A549 (cell line): ENCODE measurements at regions of chr1 and their contacts with region 1.

Region 1: DNA sequence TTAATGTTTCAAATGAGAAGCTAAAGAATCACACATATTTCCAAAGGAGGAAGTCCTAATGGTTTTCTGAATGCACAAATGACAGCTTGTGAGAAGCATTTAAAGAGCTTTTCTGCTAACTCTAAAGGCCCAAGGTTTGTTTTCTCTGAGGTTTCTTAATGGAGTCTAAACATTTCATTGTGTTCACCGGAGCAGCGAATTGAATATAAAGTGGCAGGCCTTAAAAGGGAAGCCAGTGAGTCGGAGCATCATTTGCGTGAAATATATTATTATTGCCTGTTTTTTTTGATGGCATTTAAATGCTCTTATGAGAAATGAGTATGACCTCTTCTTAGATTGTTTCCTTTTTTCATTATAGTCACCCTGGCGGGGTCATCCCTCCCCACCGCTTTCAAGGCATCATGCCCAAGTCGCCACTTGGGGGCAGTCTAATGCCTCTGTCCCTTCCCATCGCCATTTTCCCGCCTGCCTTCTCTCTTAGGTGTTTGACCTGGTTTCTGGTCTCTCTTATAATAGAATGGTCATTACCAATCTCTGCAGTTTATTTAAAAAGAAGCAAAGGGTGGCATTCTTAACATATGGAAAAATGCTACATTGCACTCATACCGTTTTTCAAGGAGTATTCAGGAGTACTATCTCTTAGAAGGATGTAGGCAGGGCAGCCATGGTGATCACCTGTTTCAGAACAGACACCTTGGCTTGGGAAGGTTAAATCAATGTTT is 25.3 kb upstream of the OVAAL start:
- DNase-seq: peak; percentile 69 to 72
- ATAC-seq: peak; percentile 90 to 93
- H3K4me3 ChIP-seq: no peak overlapping the region
- H3K27ac ChIP-seq: peak overlapping the region; percentile 16 to 55; a peak in 4 of 6 replicates
- H3K4me1 ChIP-seq: peaks cover 11% of the 10 kb centered on the region
- CTCF ChIP-seq: peak; percentile 95
- EP300 ChIP-seq: no peak
- POLR2A ChIP-seq: no peak
- RAD21 ChIP-seq: peak; percentile 97 to 98

Region 2: GRCh38 chr1:180444522-180444921 is 88.9 kb before region 1 on chr1:
- CTCF ChIA-PET with region 1: no interaction called
- POLR2A ChIA-PET with region 1: no interaction called
- DNase-seq: no peak
- ATAC-seq: no peak
- H3K4me3 ChIP-seq: no peak overlapping the region
- H3K27ac ChIP-seq: no peak overlapping the region
- H3K4me1 ChIP-seq: no peaks in the 10 kb centered on the region
- CTCF ChIP-seq: no peak
- EP300 ChIP-seq: no peak
- POLR2A ChIP-seq: no peak
- RAD21 ChIP-seq: no peak

Region 3: DNA sequence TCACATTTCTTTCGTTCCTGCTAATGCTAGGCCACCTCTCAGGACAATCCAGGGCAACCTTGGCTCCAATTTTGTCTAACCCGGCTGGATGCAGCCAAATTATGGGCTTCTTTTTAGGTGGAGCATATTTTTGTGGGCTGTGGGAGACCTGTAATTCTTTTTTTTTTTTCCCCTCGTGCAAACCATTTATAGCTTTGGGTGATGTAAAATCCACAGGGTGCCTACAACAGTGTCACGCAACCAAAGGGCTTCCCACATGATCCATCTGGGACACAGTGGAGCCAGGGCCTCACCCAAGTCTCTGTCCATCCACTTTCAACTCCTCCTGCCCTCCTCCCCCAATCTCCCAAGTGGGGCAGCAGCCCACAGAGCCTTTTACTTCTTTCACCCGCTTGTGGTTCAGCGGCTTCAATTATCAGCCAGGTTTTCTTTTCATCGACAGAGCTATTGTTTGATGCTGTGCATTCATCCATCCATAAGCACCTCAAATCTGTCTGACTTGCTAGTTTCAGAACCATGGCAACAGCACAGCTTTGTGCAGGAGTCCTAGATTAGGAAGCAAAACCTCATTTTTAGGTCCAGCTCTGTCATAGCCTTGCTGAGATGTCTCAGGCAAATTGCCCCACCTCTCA is 15.4 kb after region 1 on chr1:
- CTCF ChIA-PET with region 1: interaction called, 11 read pairs
- POLR2A ChIA-PET with region 1: no interaction called
- DNase-seq: no peak
- ATAC-seq: no peak
- H3K4me3 ChIP-seq: no peak overlapping the region
- H3K27ac ChIP-seq: no peak overlapping the region
- H3K4me1 ChIP-seq: no peaks in the 10 kb centered on the region
- CTCF ChIP-seq: no peak
- EP300 ChIP-seq: no peak
- POLR2A ChIP-seq: no peak
- RAD21 ChIP-seq: no peak